Dorsolateral prefrontal cortex (tissue), 120 donors: ENCODE measurements at regions of chr12 and their contacts with region 1.

Region 1: DNA sequence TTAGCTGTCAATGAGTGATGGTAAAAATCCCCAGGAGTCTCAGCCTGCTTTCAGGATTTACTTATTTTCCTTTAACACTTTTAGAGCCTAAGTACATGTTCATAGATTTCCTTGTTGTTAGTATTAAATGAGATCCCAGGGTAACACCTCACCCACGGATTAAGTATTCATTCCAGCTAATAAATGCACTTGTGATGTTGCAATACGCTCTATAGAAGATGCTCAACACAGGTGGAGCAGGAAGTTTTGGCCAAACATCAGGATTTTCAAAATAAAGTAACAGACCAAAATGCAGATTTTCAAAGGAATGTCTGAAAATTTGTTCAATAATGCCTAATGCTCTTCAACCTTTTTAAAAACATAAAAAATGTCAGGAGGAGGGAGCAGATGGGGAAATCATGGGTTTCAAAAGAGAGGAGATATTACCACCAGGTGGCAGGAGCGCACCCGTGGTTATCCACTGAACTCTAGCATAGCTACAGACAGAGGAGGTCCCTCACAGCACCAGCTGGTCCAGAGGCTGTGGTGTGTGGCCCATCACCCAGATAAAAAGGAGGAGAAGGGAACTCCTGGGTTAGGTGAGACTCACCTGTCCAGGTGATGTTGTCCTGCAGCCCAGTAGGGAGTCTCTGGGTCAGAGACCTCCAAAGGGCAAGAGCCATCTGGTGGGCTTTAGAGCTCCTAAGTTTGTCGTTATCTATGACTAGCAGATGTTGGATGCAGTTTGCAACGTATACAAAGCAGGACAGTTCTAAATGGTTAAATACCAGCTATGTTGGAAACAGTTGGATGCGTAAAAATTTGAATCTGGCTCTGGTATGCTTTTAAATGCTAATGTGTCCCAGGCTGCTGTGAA is 1158.4 kb upstream of the TMEM132C start:
- DNase-seq: peak; percentile 35 to 79 (median 68)
- H3K4me3 ChIP-seq: no peak overlapping the region
- H3K27ac ChIP-seq: no peak overlapping the region
- H3K27me3 ChIP-seq: no peaks in the 10 kb centered on the region
- CTCF ChIP-seq: peak in 55 of 56 donors; percentile 59 to 90 (median 79)

Region 2: DNA sequence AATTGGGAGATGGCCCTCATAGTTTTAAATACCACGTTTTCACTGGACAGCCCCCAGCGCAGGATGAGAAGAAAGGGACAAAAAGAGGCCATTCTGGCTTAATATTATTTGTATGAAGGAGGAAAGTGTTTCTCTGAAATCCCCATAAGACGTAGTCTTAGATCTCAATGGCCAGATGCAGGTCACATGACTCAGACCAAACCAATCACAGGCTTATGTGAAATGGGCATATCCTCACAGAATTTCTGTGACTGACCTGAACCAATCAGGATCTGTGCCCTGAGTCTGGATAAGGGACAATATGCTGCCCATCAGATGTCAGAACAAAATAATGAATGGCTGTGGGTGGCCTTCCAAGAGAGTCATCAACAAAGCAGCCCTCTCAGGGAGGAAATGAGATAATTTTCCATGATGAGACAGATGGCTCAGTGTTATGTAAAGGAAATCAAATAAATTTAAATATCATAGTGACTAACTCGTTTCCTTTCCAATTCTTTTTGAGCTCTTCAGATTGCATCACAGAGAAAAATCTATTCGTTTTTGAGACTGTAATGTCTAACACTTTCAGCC is 148.9 kb after region 1 on chr12:
- intact Hi-C with region 1: no loop called
- DNase-seq: no peak
- H3K4me3 ChIP-seq: no peak overlapping the region
- H3K27ac ChIP-seq: no peak overlapping the region
- H3K27me3 ChIP-seq: no peaks in the 10 kb centered on the region
- CTCF ChIP-seq: no peak

Region 3: DNA sequence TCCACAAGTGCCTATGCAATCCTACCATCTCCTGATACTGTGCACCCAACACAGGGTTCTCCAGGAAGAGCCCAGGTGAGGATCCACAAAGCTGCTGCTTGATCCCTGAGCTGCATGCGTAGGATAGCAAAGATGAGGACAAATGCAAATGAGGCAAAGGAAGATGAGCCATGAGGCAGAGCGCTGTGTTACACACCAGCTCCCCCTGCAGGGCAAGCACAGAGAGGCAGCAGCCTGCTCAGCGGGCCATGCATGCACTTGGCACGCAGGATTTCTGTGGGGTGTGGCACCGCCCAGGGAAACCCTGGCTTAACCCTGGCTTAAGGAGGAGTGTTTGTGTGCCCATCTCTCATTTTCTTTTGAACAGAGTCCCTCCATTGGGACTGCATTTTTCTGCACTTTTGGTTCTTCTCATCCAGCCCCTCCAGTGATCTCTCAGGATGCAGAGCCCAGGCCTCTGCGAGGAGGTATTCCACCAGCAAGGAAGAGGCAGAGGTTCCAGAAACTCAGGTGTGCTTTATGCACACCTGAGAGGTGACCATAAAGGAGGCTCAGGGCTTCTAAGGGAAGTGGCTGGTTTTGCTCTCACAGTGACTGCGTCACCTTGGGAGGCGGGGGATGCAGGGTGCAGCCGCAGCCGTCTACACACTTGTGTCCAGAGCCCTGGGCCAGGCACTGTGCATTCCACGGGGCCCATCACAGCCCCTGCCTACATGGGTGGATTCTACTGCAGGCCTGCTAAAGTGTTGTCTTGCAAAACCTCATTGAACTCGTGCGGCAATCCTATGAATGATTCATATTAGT is 185.1 kb after region 1 on chr12:
- intact Hi-C with region 1: loop called (anchors 5 kb)
- DNase-seq: peak in 8 of 10 donors; percentile 29 to 72 (median 58)
- H3K4me3 ChIP-seq: no peak overlapping the region
- H3K27ac ChIP-seq: no peak overlapping the region
- H3K27me3 ChIP-seq: no peaks in the 10 kb centered on the region
- CTCF ChIP-seq: peak; percentile 32 to 86 (median 76)

Region 4: DNA sequence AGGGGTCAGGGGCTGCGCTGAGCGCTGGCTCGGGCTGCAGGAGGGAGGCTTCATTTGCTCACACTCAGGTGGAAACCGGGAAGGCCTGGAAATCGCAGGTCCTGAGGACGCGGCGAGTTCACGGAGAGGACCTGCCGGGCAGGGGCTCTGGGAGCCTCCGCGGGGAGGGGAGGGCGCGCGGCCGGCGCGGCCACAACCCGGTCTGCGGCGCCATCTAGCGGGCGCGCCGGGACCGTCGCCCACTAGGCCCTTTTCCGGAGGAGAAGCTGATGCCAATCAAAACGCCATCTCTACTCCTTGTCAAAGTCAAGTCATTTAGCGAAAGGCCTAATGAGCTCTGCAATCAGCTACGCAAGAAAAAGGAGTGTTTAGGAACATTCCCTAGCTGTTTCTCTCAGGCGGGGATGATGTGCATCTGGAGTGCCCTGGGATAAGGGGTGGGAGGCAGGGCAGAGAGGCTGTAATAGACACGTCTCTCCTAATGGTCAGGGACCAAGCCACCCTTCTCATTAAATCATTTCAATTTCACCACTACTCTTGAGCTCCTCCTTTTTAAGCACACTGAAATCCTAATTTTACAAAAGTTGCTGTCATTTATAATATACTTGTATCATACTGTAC is 272.6 kb after region 1 on chr12:
- intact Hi-C with region 1: loop called (anchors 2 kb)
- DNase-seq: peak in 9 of 10 donors; percentile 32 to 82 (median 53)
- H3K4me3 ChIP-seq: peak overlapping the region in 58 of 59 donors; percentile 6 to 74 (median 54)
- H3K27ac ChIP-seq: peak overlapping the region in 3 of 59 donors; percentile 34 to 46 (median 43)
- H3K27me3 ChIP-seq: no peaks in the 10 kb centered on the region
- CTCF ChIP-seq: peak; percentile 59 to 98 (median 93)